ENCODE measurements at regions of chr11 and their contacts with region 1.

Region 1: DNA sequence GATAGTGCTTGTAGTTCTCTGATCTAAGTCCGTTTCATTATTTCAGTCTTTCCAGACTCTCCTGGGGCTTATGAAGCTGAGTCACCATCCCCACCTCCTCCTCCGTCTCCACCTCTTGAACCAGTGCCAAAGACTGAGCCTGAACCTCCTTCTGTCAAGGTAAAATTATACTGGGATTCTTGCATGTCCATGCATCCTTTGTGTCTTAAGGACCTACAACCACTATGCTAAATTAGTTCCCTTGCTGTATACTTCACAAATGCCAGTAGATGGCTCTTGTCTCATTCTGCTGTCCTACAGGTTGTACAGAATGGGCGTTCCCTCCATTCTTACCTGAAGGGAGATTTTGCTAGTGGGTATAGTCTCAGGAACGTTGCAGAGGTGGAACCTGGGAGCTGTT is 42.2 kb downstream of the POLD3 start:
- DNase-seq: no peak
- H3K4me3 ChIP-seq: no peak overlapping the region
- H3K27ac ChIP-seq: peak overlapping the region in 3 of 4 donors; percentile 71 to 89 (median 81)
- H3K4me1 ChIP-seq: peaks cover 0 to 94% (median 61%) of the 10 kb centered on the region in 4 donors
- H3K27me3 ChIP-seq: no peaks in the 10 kb centered on the region
- CTCF ChIP-seq: peak in 2 of 4 experiments; percentile 18 to 24
- EP300 ChIP-seq: no peak
- POLR2A ChIP-seq: no peak

Region 2: GRCh38 chr11:74581954-74582547 is 52.5 kb before region 1 on chr11:
- intact Hi-C with region 1: no loop called
- DNase-seq: no peak
- H3K4me3 ChIP-seq: no peak overlapping the region
- H3K27ac ChIP-seq: no peak overlapping the region
- H3K4me1 ChIP-seq: peaks cover 0 to 13% (median 7%) of the 10 kb centered on the region in 4 donors
- H3K27me3 ChIP-seq: no peaks in the 10 kb centered on the region
- CTCF ChIP-seq: no peak
- EP300 ChIP-seq: no peak
- POLR2A ChIP-seq: no peak

Region 3: DNA sequence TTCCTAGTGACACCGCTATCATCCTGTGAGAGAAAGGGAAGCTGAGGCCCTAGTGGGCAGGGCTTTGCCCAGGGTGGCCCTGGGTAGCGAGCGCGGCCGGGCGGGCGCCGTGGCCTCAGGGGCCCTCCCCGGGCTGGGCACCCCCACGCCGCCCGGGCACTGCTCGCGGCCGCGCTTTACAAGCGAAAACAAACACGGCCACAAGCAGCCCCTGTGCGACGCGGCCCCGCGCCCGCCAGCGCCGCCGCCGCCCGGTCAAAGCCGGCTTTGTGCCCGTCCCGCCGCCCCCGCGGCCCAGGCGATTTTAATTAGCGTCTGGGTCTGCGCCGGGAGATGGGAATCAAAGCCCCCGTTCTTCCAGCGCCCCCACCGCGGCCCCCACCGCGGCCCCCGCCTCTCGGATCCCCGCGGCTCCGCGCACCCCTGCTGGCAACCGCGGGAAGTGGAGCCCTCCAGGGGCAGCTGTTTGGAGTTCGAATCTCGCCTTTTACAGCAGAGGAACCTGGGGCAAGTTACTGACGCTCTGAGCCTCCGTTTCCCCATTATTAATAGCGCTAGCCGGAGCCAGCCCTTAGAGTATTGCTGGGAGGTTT is 48.8 kb after region 1 on chr11:
- intact Hi-C with region 1: loop called (anchors 5 kb)
- DNase-seq: peak; percentile 66
- H3K4me3 ChIP-seq: peak overlapping the region in 3 of 4 donors; percentile 48 to 54 (median 49)
- H3K27ac ChIP-seq: peak overlapping the region; percentile 63 to 83 (median 76)
- H3K4me1 ChIP-seq: peaks cover 0 to 52% (median 42%) of the 10 kb centered on the region in 4 donors
- H3K27me3 ChIP-seq: no peaks in the 10 kb centered on the region
- CTCF ChIP-seq: peak; percentile 21 to 74 (median 51)
- EP300 ChIP-seq: no peak
- POLR2A ChIP-seq: no peak

Region 4: GRCh38 chr11:74720596-74721478 is 86.3 kb after region 1 on chr11:
- intact Hi-C with region 1: loop called (anchors 5 kb)
- DNase-seq: peak; percentile 97
- H3K4me3 ChIP-seq: no peak overlapping the region
- H3K27ac ChIP-seq: peak overlapping the region; percentile 79 to 93 (median 84)
- H3K4me1 ChIP-seq: peaks cover 0 to 86% (median 73%) of the 10 kb centered on the region in 4 donors
- H3K27me3 ChIP-seq: no peaks in the 10 kb centered on the region
- CTCF ChIP-seq: no peak
- EP300 ChIP-seq: peak in 2 of 4 donors; percentile 41 to 65
- POLR2A ChIP-seq: no peak

Measured in sigmoid colon (tissue), 7 donors.